ENCODE measurements at regions of chr2 and their contacts with region 1.

Region 1: DNA sequence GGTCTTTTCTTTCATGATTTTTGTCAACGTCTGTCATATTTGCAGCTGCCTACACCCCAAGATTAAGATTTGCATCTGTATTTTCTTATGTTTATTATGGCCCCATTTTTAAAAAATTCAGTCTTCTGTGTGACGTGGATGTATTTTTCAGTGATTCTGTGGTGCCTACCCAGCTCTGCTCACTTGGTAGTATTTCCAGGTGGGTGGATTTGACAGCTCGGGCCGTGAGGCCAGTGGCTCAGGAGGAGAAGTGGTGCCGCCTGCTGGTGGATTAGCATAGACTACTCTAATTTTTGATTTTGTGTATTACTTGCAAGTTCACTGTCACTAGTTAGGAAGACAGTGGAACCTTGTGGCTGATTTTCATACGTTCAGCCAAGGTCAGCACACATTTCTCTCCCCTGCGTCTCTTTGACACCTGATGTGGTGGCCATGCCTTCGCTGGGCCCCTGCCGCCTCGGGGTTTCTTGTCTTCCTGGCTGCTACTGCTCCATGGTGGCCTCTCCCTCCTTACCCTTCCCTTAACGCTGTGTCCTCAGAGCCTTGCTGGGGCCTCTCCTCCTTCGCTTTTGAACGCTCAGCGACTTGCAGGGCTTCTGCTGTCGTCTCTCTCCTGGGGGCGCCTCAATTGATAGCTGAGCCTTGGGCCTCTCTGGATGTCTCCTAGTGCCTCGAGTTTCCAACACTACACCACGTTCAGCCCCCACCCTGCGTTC is 89.3 kb downstream of the DGKD start:
- DNase-seq: peak; percentile 91
- ATAC-seq: peak; percentile 93
- H3K4me3 Mint-ChIP-seq: no peak overlapping the region
- H3K27ac Mint-ChIP-seq: no peak overlapping the region
- H3K4me1 Mint-ChIP-seq: peaks cover 11% of the 10 kb centered on the region
- H3K27me3 Mint-ChIP-seq: no peaks in the 10 kb centered on the region

Region 2: DNA sequence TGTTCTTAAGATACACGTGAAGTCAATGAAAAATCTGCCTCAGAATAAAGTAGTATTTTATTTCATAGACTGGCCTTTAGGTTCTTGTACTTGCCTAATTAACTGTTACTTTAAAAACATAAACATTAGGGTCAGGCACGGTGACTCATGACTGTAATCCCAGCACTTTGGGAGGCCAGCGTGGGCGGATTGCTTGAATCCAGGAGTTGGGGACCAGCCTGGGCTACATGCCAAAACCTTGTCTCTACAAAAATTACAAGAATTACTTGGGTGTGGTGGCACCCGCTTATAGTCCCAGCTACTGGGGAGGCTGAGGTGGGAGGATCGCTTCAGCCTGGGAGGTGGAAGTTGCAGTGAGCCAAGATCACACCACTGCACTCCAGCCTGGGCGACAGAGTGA is 589.5 kb before region 1 on chr2:
- CTCF ChIA-PET with region 1: no interaction called
- POLR2A ChIA-PET with region 1: no interaction called
- intact Hi-C with region 1: loop called in 1 of 2 experiments (anchors 10 kb)
- DNase-seq: no peak
- ATAC-seq: no peak
- H3K4me3 Mint-ChIP-seq: no peak overlapping the region
- H3K27ac Mint-ChIP-seq: no peak overlapping the region
- H3K4me1 Mint-ChIP-seq: peaks cover 3% of the 10 kb centered on the region
- H3K27me3 Mint-ChIP-seq: no peaks in the 10 kb centered on the region

Region 3: DNA sequence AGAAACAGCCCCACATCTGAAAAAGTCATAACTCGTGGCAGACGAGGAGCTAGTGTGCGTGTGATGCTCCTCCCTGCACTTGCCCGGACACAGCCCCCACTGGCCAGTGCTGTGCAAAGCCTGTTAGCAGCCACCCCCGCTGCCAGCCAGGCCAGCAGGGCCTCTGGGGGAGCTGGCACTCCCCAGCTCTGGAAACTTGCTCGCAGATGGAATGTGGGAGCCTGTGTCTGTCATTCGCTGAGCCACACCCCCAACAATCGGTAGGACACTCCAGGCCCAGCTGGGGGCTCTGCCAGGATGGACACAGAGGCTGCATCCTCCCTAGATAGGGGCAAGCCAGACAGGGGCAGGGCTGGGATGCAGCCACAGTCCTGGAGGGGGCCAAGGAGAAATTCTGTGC is 254.6 kb before region 1 on chr2:
- CTCF ChIA-PET with region 1: no interaction called
- POLR2A ChIA-PET with region 1: no interaction called
- intact Hi-C with region 1: no loop called
- DNase-seq: no peak
- ATAC-seq: no peak
- H3K4me3 Mint-ChIP-seq: no peak overlapping the region
- H3K27ac Mint-ChIP-seq: no peak overlapping the region
- H3K4me1 Mint-ChIP-seq: no peaks in the 10 kb centered on the region
- H3K27me3 Mint-ChIP-seq: no peaks in the 10 kb centered on the region

Region 4: GRCh38 chr2:233267516-233268245 is 175.9 kb before region 1 on chr2:
- CTCF ChIA-PET with region 1: interaction called, 5 read pairs
- POLR2A ChIA-PET with region 1: no interaction called
- intact Hi-C with region 1: loop called (anchors 5 kb)
- DNase-seq: peak; percentile 85
- ATAC-seq: peak; percentile 95
- H3K4me3 Mint-ChIP-seq: peak overlapping the region; percentile 53
- H3K27ac Mint-ChIP-seq: peak overlapping the region; percentile 98
- H3K4me1 Mint-ChIP-seq: peaks cover 66% of the 10 kb centered on the region
- H3K27me3 Mint-ChIP-seq: no peaks in the 10 kb centered on the region

Region 5: DNA sequence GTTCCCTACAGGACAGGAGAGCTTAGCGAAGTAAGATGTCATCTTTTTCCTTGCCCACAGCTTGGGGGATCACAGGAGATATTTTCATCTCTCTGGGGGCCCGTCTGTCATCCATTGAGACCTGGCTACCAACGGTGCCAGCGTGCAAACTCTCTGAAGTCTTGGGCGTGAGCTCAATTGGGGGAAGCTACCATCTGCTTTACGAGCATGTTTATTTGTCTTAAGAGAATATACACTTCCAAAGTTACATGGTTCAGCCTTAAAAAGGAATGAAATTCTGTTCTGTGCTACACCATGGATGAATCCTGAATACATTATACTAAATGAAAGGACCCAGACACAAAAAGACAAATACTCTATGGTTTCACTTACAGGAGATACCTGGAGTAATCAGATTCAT is 122.5 kb before region 1 on chr2:
- CTCF ChIA-PET with region 1: interaction called, 3 read pairs
- POLR2A ChIA-PET with region 1: interaction called, 10 read pairs
- intact Hi-C with region 1: no loop called
- DNase-seq: no peak
- ATAC-seq: no peak
- H3K4me3 Mint-ChIP-seq: no peak overlapping the region
- H3K27ac Mint-ChIP-seq: no peak overlapping the region
- H3K4me1 Mint-ChIP-seq: no peaks in the 10 kb centered on the region
- H3K27me3 Mint-ChIP-seq: no peaks in the 10 kb centered on the region

Region 6: DNA sequence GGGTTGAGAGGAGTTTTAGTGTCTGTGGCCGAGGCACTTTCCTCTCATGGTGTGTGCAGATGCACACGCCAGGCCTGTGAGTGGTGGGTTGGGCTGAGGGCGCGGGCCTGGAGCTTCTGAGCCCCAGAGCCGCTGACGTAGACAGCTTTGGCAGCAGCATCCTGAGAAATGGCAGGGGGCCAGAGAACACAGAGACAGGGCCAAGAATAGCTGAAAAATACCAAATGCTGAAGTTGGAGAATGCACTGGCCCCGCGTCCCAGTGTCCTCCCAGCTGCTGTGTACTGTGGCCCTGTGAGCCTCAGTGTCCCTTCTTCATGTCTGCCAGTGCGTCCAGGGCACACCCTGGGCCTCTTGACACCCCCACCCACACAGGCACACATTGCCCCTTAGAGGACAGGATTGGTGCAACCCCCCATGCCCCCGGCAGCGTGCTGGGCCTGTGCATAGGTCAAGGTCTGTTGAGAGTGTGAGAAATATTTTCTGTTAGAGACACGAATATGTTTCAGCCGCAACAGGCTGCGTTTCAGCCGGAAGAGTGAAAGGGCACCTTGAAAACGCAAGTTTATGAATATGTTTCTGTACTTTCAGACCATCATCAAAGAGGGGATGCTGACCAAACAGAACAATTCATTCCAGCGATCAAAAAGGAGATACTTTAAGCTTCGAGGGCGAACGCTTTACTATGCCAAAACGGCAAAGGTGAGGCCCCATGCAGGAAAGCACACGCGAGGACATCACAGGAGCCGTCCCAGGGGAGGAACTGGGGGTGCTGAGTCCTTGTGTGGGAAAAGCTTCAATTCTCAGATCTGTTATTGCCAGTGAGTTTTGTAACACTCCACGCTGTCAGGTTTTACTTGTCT is 55.7 kb before region 1 on chr2:
- CTCF ChIA-PET with region 1: interaction called, 6 read pairs
- POLR2A ChIA-PET with region 1: no interaction called
- intact Hi-C with region 1: loop called in 1 of 2 experiments (anchors 10 kb)
- DNase-seq: no peak
- ATAC-seq: no peak
- H3K4me3 Mint-ChIP-seq: no peak overlapping the region
- H3K27ac Mint-ChIP-seq: no peak overlapping the region
- H3K4me1 Mint-ChIP-seq: peaks cover 51% of the 10 kb centered on the region
- H3K27me3 Mint-ChIP-seq: no peaks in the 10 kb centered on the region

Region 7: DNA sequence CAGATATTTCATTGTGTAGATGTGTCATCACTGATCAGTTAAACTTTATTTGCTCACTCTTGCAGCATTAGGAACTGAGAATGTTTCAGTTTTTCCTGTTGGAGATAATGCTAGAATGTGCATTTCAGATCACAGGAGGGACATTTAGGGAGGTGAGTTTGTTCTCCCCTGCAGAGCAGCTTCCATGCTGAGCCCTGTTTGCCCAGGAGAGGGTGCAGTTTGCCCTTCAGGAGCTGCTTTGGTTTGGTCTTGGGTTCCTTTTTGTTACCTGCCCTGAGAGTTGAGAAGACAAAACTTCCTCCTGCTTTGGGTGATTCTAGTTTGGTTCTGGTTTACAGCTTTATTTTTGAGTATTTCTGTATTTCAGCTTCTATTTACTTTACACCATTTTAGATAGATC is 39.4 kb before region 1 on chr2:
- CTCF ChIA-PET with region 1: interaction called, 167 read pairs
- POLR2A ChIA-PET with region 1: no interaction called
- intact Hi-C with region 1: loop called (anchors 1 kb)
- DNase-seq: peak; percentile 80
- ATAC-seq: peak; percentile 49
- H3K4me3 Mint-ChIP-seq: no peak overlapping the region
- H3K27ac Mint-ChIP-seq: peak overlapping the region; percentile 24
- H3K4me1 Mint-ChIP-seq: peaks cover 56% of the 10 kb centered on the region
- H3K27me3 Mint-ChIP-seq: no peaks in the 10 kb centered on the region

Region 8: DNA sequence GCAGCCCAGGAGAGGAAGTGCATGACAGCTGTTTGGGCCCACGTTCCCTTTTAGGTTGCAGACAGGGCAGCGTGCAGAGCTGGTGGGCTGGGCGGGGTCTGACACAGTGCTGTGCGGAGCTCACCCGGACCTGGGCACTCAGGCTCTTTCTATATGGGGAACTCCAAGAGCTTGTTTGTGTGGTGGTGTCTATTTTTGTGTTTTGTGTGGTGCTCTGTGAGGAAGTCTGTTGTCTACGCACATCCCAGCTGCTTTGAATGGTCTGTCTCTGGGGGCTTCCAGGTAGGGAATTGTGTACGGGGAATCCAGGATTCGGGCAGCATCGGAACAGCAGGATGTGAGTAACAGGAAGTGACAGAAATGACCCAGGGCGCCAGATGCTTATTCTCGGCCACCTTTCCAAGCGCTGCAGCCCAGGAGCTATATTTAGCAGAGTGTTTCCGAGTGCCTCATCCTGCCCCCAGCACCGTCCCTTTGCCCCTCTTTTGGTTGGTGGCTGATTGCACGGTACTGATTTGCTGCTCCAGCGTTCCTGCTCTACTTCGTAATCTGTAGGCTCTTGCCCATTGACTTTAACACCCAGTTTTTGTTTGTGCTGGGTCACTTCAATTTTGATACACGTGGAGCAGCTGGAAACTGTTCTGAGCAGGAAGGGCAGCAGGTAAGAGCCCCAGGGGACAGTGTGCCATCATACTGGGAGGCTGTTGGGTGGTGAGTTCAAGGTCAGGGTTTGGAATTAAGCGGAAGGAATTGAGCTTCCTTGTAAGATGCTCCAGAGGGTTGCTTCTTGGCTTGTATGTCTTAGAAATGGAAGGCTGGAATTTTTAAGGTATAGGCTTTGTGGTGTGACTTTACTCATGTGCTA is 24.6 kb before region 1 on chr2:
- CTCF ChIA-PET with region 1: interaction called, 16 read pairs
- POLR2A ChIA-PET with region 1: no interaction called
- intact Hi-C with region 1: no loop called
- DNase-seq: peak; percentile 72
- ATAC-seq: peak; percentile 52
- H3K4me3 Mint-ChIP-seq: peak overlapping the region; percentile 63
- H3K27ac Mint-ChIP-seq: peak overlapping the region; percentile 81
- H3K4me1 Mint-ChIP-seq: peaks cover 97% of the 10 kb centered on the region
- H3K27me3 Mint-ChIP-seq: no peaks in the 10 kb centered on the region

Measured in activated CD4-positive, alpha-beta T cell treated with anti-CD3 and anti-CD28 coated beads for 36 hours (primary cell).